Ovary (tissue), 10 donors: ENCODE measurements at regions of chr10 and their contacts with region 1.

Region 1: DNA sequence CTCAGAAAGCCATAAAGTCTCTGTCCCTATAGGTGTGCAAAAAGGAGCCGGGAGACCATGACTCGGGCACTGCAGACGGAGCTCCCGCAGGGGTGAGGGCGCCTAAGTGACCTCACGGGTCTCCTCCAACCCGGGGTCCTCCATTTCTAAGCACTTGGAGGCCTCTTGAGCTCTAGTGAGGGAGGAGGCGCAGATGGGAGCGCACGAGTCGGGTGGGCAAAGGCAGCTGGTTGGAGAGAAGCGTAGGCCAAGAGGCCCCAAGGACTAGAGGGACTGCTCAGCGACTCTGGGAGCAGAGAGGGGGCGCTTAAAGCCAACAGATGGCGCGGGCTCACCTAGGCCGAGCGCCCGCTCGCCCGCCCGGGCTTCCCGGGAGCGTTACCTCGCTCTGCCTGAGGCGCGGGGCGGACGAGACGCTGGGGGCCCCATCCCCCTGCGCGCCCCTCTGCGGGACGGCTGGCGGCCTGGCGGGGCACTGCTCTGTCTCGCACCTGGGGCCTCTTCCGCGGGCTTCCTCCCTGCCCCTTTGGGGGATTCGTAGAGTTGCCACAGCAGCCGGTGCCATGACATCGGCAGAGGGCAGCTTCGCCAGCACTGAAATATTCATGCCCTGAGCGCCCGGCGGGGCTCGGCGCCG is 518 bp upstream of the CDH23 start:
- DNase-seq: peak; percentile 79 to 86 (median 82)
- H3K4me3 ChIP-seq: peak overlapping the region; percentile 63
- H3K27ac ChIP-seq: peak overlapping the region; percentile 83 to 88
- H3K4me1 ChIP-seq: peaks cover 7% of the 10 kb centered on the region
- H3K27me3 ChIP-seq: no peaks in the 10 kb centered on the region
- CTCF ChIP-seq: peak; percentile 71 to 89 (median 87)
- EP300 ChIP-seq: no peak
- POLR2A ChIP-seq: no peak

Region 2: DNA sequence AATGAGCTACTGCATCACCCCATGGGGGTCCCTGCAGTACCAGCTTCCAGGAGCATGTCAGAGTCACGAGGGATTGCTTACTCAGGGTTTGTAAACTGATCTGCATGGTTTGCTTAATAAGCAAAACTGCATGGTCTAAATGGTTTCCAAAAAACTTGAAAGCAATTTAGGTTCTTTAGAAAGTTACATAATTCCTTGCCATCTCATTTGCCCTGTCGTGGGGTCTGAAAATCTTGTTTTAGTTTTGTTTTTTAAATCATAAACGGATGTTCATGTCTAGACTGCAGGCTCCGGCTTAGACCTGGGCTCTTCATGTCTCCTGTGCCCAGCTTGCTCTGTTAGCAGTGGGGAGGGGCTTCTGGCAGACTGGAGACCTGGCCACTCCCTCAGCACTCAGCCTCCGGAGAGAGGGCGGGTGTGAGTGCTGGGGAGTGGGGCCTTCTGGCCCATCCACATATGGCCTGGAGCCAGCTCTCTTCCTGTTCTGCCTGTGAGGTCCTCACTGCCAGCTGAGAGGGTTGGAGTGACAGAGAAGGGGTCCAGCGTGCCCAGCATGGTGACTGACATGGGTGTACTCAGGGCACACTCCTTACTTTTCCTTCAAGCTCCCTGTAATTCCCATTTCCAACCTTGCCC is 811.2 kb before region 1 on chr10:
- intact Hi-C with region 1: no loop called
- DNase-seq: peak in 1 of 5 donors; percentile 37
- H3K4me3 ChIP-seq: no peak overlapping the region
- H3K27ac ChIP-seq: no peak overlapping the region
- H3K4me1 ChIP-seq: peaks cover 11% of the 10 kb centered on the region
- H3K27me3 ChIP-seq: no peaks in the 10 kb centered on the region
- CTCF ChIP-seq: no peak
- EP300 ChIP-seq: no peak
- POLR2A ChIP-seq: no peak

Region 3: GRCh38 chr10:71064413-71065118 is 331.6 kb before region 1 on chr10:
- intact Hi-C with region 1: no loop called
- DNase-seq: no peak
- H3K4me3 ChIP-seq: no peak overlapping the region
- H3K27ac ChIP-seq: no peak overlapping the region
- H3K4me1 ChIP-seq: no peaks in the 10 kb centered on the region
- H3K27me3 ChIP-seq: no peaks in the 10 kb centered on the region
- CTCF ChIP-seq: no peak
- EP300 ChIP-seq: no peak
- POLR2A ChIP-seq: no peak

Region 4: GRCh38 chr10:71569775-71570588 is 173.8 kb after region 1 on chr10:
- intact Hi-C with region 1: loop called (anchors 2 to 5 kb)
- DNase-seq: peak; percentile 76 to 87 (median 80)
- H3K4me3 ChIP-seq: no peak overlapping the region
- H3K27ac ChIP-seq: no peak overlapping the region
- H3K4me1 ChIP-seq: no peaks in the 10 kb centered on the region
- H3K27me3 ChIP-seq: no peaks in the 10 kb centered on the region
- CTCF ChIP-seq: peak; percentile 85 to 95 (median 90)
- EP300 ChIP-seq: no peak
- POLR2A ChIP-seq: no peak

Region 5: DNA sequence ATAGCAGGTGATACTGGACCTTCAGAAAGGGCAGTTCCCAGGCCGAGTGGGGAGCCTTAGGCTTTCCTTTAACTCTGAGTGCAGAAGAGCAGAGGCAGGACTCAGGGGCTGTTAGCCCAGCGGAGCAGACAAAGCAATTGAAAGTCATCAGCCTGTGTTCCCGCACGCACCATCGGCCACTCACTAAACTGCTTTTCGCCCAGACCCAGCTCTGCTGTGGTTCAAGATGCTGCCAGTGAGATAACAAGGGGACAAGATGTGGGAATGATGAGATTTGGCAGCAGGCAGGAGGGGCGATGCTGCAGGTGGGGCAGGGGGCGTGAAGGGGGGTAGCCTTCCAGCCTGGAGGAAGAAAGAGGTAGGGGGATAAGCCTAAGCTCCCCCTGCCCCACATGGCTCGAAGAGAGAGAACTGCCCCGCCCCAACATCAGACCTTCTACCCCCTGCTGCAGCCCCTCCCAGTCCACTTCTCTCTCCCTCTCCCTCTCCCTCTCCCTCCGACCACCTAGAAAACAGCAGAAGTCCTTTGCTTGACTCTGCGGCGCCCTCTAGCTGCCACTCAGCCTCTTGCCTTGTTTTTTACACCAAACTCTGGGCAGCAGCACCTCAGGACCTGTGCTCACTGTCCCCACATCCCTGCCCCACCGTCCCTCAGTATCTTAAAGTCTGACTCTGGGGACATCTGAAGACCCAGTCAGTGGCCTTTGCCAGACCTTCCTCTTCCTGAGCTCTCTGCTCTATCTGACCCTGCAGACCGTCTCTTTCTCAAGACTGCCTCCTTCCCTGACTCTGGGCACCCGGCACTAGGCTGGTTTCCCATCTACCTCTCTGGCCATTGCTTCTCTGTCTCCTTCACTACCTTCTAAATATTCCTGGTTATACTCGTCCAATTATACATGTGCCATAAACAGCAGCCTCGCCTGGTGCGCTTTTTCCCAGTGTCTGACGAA is 212.9 kb after region 1 on chr10:
- intact Hi-C with region 1: loop called in 3 of 4 experiments (anchors 2 to 10 kb)
- DNase-seq: peak; percentile 84 to 92 (median 91)
- H3K4me3 ChIP-seq: no peak overlapping the region
- H3K27ac ChIP-seq: no peak overlapping the region
- H3K4me1 ChIP-seq: no peaks in the 10 kb centered on the region
- H3K27me3 ChIP-seq: no peaks in the 10 kb centered on the region
- CTCF ChIP-seq: peak; percentile 65 to 74 (median 70)
- EP300 ChIP-seq: no peak
- POLR2A ChIP-seq: no peak

Region 6: DNA sequence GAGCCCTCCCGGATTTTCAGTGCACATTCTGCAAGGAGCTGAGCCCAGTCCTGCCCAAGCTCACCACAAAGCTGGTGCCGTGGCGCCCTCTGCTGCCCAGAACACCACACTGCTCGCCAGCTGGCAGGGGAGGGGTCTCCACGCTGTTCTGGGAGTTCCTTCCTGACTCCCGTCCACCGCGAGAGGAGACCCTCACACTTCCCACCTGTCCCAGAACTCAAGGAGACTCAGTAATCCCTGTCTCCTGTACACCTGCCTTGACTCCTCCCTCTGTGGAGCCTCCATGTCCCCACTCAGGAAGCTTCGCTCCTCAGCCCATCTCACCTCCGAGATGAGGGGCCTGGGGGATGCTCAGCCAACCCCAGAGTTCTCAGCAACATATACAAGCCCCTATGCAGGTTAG is 312.1 kb after region 1 on chr10:
- intact Hi-C with region 1: loop called in 3 of 4 experiments (anchors 2 to 5 kb)
- DNase-seq: peak; percentile 48 to 83 (median 74)
- H3K4me3 ChIP-seq: no peak overlapping the region
- H3K27ac ChIP-seq: no peak overlapping the region
- H3K4me1 ChIP-seq: peaks cover 6% of the 10 kb centered on the region
- H3K27me3 ChIP-seq: no peaks in the 10 kb centered on the region
- CTCF ChIP-seq: peak; percentile 65 to 87 (median 67)
- EP300 ChIP-seq: no peak
- POLR2A ChIP-seq: no peak

Region 7: GRCh38 chr10:71771821-71772617 is 375.8 kb after region 1 on chr10:
- intact Hi-C with region 1: loop called in 1 of 4 experiments (anchors 10 kb)
- DNase-seq: peak; percentile 80 to 90 (median 83)
- H3K4me3 ChIP-seq: peak overlapping the region; percentile 84
- H3K27ac ChIP-seq: peak overlapping the region; percentile 79 to 87
- H3K4me1 ChIP-seq: peaks cover 32% of the 10 kb centered on the region
- H3K27me3 ChIP-seq: no peaks in the 10 kb centered on the region
- CTCF ChIP-seq: no peak
- EP300 ChIP-seq: peak; percentile 40
- POLR2A ChIP-seq: peak; percentile 30